ENCODE measurements at regions of chr2 and their contacts with region 1.

Region 1: DNA sequence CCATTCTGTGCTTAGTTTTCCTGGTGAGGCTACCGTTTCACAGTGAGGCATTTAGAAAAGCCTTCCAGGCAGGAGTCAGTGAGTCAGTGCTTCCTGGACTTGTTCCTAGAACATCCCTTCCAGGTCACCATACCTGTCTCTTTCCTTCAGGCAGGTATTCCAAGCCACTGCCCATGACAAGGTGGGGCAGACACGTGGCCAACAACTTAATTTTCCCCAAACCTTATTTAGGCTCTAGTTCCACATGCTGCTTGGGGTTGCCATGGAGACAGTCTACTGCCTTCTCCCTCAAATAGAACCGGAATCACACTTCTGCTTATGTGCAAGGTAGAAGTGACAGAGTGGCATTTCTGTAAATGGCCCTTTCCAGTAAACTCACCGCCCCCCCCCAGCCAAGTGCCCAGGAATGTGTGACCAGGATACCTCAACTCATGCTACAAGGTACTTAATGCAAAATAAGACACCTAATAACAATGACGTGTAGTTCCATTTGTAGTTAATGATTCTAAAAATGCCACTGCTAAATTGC is 258.3 kb downstream of the PRKCE start:
- DNase-seq: no peak
- ATAC-seq: no peak

Region 2: GRCh38 chr2:45748239-45748638 is 161.5 kb before region 1 on chr2:
- intact Hi-C with region 1: no loop called
- DNase-seq: no peak
- ATAC-seq: no peak

Region 3: DNA sequence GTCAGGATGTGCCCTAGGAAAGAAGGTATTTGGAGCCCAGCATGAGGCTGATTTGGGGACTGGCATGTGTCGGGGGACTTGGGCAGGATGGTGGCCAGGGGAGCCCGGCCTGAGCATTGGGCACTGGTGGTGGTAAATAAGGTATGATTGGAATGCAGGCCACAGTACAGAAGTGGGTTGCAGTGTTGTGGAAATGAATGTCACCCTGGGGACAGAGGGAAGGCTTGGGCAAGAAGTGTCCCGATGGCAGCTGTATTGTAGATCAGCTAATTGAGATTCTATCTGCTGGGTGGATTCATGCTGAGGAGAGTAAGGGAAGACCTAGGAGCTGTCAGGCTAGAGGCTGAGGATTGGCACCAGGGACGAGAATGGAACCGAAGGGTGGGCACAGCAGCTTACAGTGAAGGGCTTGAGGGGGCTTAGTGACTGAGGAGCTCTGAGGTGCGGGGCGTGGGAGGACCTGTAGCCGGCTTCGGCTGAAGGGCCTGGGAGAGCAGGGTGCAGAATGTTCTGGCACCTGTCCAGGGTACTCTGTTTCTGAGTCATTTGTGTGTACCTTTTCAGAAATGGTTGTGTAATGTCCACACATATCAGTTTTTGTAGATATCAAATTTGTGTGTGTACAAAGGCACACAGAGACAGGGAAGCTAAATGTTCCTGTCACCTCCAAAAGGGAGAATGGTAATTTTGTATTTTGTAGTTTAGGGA is 88.0 kb before region 1 on chr2:
- intact Hi-C with region 1: loop called in 1 of 2 experiments (anchors 5 kb)
- DNase-seq: peak; percentile 70
- ATAC-seq: peak in 1 of 2 donors; percentile 52